Motor neuron (in vitro differentiated cells): ENCODE measurements at regions of chr15 and their contacts with region 1.

Region 1: GRCh38 chr15:55084216-55084615 is 112.5 kb downstream of the RSL24D1 start:
- ATAC-seq: no peak
- H3K4me3 ChIP-seq: no peak overlapping the region
- H3K27ac ChIP-seq: no peak overlapping the region
- H3K4me1 ChIP-seq: no peaks in the 10 kb centered on the region

Region 2: GRCh38 chr15:55026381-55026780 is 57.8 kb before region 1 on chr15:
- in situ Hi-C with region 1: loop called in 1 of 9 experiments (anchors 10 kb)
- ATAC-seq: no peak
- H3K4me3 ChIP-seq: no peak overlapping the region
- H3K27ac ChIP-seq: no peak overlapping the region
- H3K4me1 ChIP-seq: peaks cover 0 to 3% of the 10 kb centered on the region in 2 donors